ENCODE measurements at regions of chr13 and their contacts with region 1.

Region 1: DNA sequence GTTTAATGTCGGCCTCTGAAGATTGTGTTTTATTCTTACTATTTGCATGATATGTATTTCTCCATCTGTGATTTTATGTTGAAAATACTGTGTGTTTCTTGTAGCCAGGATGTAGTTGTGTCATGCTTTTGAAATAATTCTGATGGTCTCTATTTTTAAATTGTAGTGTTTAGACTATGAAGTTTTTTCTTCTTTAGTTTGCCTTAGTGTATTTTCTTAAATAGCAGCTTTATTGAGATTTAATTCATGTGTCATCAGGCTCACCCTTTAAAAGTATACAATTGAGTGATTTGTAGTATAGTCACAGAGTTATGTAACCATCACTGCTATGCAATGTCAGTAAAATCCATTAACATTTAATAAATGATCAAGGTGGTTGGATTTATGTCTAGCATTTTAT is 74.5 kb downstream of the PCCA start:
- DNase-seq: no peak
- ATAC-seq: no peak
- H3K4me3 ChIP-seq: no peak overlapping the region
- H3K27ac ChIP-seq: no peak overlapping the region
- H3K4me1 ChIP-seq: no peaks in the 10 kb centered on the region
- H3K27me3 ChIP-seq: no peaks in the 10 kb centered on the region
- CTCF ChIP-seq: no peak

Region 2: DNA sequence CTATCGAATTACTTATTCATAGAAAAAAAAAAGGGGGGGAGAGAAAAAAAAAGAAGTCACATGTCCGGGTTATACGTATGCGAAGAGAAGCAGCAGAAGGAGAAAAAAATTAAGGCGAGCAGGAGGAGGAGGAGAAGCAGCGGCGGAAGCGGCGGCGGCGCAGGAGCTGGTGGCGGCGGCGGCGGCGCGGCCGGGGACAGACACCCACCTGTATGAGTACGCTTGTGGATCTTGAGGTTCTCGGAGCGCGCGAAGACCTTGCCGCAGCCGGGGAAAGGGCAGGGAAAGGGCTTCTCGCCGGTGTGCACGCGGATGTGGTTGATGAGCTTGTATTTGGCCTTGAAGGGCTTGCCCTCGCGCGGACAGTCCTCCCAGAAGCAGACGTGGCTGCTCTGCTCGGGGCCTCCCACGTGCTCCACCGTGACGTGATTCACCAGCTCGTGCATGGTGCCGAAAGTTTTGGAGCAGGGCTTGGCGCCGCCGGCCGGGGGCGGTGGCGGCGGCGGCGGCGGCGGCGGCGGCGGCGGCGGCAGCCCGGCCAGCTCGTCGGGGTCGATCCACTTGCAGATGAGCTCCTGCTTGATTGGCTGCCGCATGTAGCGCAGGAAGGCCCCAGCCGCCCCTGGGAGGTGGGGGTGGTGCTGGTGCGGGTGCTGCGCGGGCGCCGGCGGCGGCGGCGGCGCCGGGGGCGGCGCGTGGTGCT is 193.3 kb before region 1 on chr13:
- intact Hi-C with region 1: no loop called
- DNase-seq: no peak
- ATAC-seq: no peak
- H3K4me3 ChIP-seq: peak overlapping the region in 8 of 10 donors; percentile 13 to 44 (median 27)
- H3K27ac ChIP-seq: no peak overlapping the region
- H3K4me1 ChIP-seq: peaks cover 10 to 35% (median 29%) of the 10 kb centered on the region in 9 donors
- H3K27me3 ChIP-seq: peaks cover 75 to 99% (median 96%) of the 10 kb centered on the region in 7 donors
- CTCF ChIP-seq: no peak

Region 3: GRCh38 chr13:101238555-101238954 is 1075.2 kb after region 1 on chr13:
- intact Hi-C with region 1: loop called in 1 of 10 experiments (anchors 5 kb)
- DNase-seq: no peak
- ATAC-seq: no peak
- H3K4me3 ChIP-seq: no peak overlapping the region
- H3K27ac ChIP-seq: no peak overlapping the region
- H3K4me1 ChIP-seq: peaks cover 0 to 7% (median 0%) of the 10 kb centered on the region in 9 donors
- H3K27me3 ChIP-seq: no peaks in the 10 kb centered on the region
- CTCF ChIP-seq: no peak

Measured in heart right ventricle (tissue), 16 donors.